ENCODE measurements at regions of chr9 and their contacts with region 1.

Region 1: DNA sequence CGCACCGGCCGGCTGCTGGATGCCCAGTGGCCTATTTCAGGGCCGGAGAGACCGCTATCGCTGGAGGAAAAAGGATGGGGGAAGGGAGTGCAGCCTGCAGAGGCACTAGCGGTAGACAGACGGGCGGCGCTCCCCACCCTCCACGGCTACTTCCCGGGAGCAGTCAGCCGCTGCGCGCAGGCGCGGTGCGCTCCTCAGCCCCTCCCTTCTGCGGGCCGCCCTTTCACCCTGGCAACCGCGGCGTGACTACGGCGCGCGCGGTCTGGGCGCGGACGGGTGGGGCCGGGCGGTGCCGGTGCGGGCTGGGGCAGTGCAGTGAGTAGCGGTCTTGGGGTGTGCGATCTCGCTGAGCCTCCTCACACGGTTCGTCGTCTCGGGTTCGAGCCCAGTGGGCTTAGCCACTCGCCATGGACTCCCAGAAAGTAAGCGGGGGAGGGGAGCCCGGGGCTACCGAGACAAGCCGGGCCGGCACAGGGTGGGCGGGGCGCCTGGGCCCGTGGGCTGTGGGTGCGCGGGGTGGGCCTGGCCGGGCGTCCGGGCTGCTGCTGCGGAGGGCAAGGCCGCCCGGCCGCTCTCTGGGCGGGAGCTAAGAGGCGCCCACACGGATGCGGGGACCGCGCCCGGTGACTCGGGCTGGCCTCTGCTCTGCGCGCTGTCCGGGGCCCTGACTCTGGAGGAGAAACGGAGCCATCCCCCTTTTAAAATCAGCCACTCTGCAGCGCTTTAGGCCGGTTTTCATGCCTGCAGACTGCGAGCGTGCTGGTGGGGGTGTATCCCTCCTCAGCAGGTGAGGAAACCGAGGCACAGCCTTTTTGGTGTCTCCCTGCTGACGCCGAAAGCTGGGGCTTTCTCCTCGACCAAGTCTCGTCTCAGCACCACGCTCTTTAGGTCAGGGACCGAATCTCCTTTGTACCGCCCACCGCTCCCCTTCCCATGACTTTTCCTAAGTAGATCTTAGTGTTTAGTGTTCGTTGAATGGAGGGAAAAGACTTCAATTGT is at the start of gene FSD1L:
- DNase-seq: peak; percentile 90
- H3K4me3 Mint-ChIP-seq: peak within 1 kb of the TSS; percentile 63
- H3K27ac Mint-ChIP-seq: peak within 1 kb of the TSS; percentile 49
- H3K4me1 Mint-ChIP-seq: peaks cover 13% of the 10 kb centered on the region
- H3K27me3 Mint-ChIP-seq: no peaks in the 10 kb centered on the region
- total RNA-seq, gene FSD1L: 3.2 to 3.6 TPM

Region 2: GRCh38 chr9:105385381-105385985 is 62.6 kb before region 1 on chr9:
- CTCF ChIA-PET with region 1: no interaction called
- POLR2A ChIA-PET with region 1: no interaction called
- intact Hi-C with region 1: no loop called
- DNase-seq: peak; percentile 40
- H3K4me3 Mint-ChIP-seq: peak overlapping the region; percentile 77
- H3K27ac Mint-ChIP-seq: no peak overlapping the region
- H3K4me1 Mint-ChIP-seq: peaks cover 13% of the 10 kb centered on the region
- H3K27me3 Mint-ChIP-seq: peaks cover 1% of the 10 kb centered on the region

Region 3: GRCh38 chr9:105437704-105438103 is 10.4 kb before region 1 on chr9:
- CTCF ChIA-PET with region 1: no interaction called
- POLR2A ChIA-PET with region 1: no interaction called
- intact Hi-C with region 1: no loop called
- DNase-seq: no peak
- H3K4me3 Mint-ChIP-seq: no peak overlapping the region
- H3K27ac Mint-ChIP-seq: no peak overlapping the region
- H3K4me1 Mint-ChIP-seq: no peaks in the 10 kb centered on the region
- H3K27me3 Mint-ChIP-seq: no peaks in the 10 kb centered on the region

Region 4: GRCh38 chr9:105557771-105558610 is 109.9 kb after region 1 on chr9 and contains the start of gene FKTN:
- CTCF ChIA-PET with region 1: no interaction called
- POLR2A ChIA-PET with region 1: no interaction called
- intact Hi-C with region 1: loop called (anchors 1 kb)
- DNase-seq: peak; percentile 90
- H3K4me3 Mint-ChIP-seq: peak within 1 kb of the TSS; percentile 94
- H3K27ac Mint-ChIP-seq: peak within 1 kb of the TSS; percentile 52
- H3K4me1 Mint-ChIP-seq: peaks cover 21% of the 10 kb centered on the region
- H3K27me3 Mint-ChIP-seq: no peaks in the 10 kb centered on the region
- total RNA-seq, gene FKTN: 15.8 to 16.8 TPM